Endothelial cell of umbilical vein (primary cell): ENCODE measurements at regions of chr14 and their contacts with region 1.

Region 1: DNA sequence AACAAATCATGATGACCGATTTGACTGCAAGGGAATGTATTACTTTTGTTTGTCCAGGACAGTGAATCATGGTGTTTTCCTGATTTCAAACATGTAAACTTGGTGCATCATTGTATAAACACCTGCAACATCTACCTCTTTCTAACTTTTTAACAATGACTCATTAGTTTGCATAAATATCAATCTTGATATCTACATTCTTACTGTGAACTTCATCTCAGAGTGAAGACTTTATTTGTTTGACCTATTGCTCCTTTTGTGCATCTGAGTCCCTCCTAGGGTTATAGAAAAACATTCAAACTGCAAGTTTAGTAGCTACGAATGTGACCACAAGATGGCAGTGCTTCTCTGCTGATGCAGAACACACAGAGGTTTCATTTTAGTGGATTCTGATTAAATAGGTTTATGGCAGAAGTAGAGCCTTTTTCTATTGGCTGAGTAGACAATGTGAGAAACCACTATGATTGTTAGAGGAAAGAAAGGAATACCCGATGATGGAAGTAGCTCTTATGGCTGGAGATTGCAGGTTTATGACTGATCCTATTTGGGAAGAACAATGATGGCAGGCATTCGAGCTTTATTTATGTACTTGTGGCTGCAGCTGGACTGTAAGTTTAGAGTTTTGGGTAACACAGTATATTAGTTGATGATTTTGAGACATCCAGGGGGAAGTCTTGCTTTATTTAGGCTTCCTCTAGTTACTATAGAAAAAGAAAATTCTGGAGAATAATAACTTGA is 244.2 kb upstream of the OR4E1 start:
- DNase-seq: peak; percentile 91
- H3K4me3 ChIP-seq: no peak overlapping the region
- H3K27ac ChIP-seq: peak overlapping the region; percentile 86
- H3K4me1 ChIP-seq: peaks cover 60% of the 10 kb centered on the region
- H3K27me3 ChIP-seq: no peaks in the 10 kb centered on the region
- CTCF ChIP-seq: peak; percentile 66 to 69
- POLR2A ChIP-seq: peak; percentile 16

Region 2: DNA sequence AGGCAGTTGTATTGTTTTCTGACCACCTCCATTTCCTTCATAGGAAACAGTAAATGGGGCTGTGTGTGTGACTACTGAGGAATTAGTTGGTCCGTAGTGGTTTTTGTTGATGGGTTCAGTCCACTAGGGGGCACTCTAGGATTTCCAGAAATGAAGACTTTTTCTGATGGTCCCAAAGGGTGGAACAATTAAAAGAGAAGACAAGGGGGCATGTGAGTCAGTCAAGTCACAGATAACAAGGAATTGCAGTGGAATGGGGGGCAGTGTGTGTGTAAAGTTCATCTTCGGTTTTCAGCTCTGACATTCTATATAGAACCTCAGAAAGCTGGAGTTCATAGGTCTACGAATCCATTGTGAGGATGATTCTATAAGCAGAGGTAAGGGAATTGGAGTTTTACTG is 57.7 kb before region 1 on chr14:
- CTCF ChIA-PET with region 1: interaction called, 41 read pairs
- POLR2A ChIA-PET with region 1: no interaction called
- dilution Hi-C with region 1: no loop called
- intact Hi-C with region 1: no loop called
- DNase-seq: peak; percentile 58
- H3K4me3 ChIP-seq: no peak overlapping the region
- H3K27ac ChIP-seq: no peak overlapping the region
- H3K4me1 ChIP-seq: no peaks in the 10 kb centered on the region
- H3K27me3 ChIP-seq: peaks cover 11 to 12% of the 10 kb centered on the region in 2 experiments
- CTCF ChIP-seq: peak; percentile 48 to 61
- POLR2A ChIP-seq: no peak

Region 3: DNA sequence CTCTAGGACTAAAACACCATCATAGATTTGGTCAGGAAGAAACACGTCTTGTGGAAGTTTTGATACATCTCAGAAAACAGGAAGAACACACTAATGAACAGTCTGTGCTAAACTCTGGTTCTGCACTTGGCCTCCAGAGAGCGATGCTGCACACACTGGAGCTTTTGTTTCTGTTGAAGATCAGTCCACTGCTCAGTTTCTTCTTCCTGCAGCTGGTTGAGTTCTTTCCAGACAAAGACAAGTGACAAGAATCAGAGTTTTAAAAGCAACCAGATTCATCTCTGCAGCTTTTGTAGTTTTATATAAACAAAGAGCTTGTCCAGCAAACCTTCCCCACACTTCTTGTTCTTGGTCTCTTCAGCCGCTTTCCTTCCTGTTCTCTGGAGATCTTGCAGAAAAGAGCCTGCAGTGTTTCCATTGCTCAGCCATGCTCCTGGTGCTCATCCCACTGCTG is 15.2 kb before region 1 on chr14:
- CTCF ChIA-PET with region 1: interaction called, 23 read pairs
- POLR2A ChIA-PET with region 1: no interaction called
- dilution Hi-C with region 1: no loop called
- intact Hi-C with region 1: no loop called
- DNase-seq: peak; percentile 21
- H3K4me3 ChIP-seq: no peak overlapping the region
- H3K27ac ChIP-seq: no peak overlapping the region
- H3K4me1 ChIP-seq: peaks cover 5% of the 10 kb centered on the region
- H3K27me3 ChIP-seq: no peaks in the 10 kb centered on the region
- CTCF ChIP-seq: peak; percentile 29 to 49
- POLR2A ChIP-seq: no peak

Region 4: DNA sequence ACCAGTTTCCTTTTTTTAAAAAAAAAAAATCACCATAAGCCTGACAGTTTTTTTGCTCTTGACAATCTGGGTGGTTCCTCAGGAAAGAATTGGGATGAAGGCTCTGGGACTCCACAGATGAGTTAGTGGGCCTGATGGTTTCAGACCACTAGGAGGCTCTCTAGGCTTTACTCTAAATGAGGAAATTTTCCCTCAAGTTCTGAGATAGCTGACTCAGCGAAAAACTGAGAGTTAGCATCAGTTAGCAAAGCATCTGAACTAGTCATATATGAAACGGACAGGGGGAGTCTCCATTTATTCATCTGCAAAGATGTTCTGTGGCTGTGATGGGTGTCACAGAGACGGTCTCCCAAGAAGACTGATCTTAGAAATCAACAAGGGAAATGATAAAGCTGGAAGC is 70.1 kb after region 1 on chr14:
- CTCF ChIA-PET with region 1: interaction called, 15 read pairs
- POLR2A ChIA-PET with region 1: no interaction called
- dilution Hi-C with region 1: no loop called
- intact Hi-C with region 1: no loop called
- DNase-seq: peak; percentile 39
- H3K4me3 ChIP-seq: no peak overlapping the region
- H3K27ac ChIP-seq: no peak overlapping the region
- H3K4me1 ChIP-seq: no peaks in the 10 kb centered on the region
- H3K27me3 ChIP-seq: peaks cover 5 to 14% of the 10 kb centered on the region in 2 experiments
- CTCF ChIP-seq: peak; percentile 60 to 69
- POLR2A ChIP-seq: no peak

Region 5: GRCh38 chr14:22099942-22100763 is 182.3 kb after region 1 on chr14:
- CTCF ChIA-PET with region 1: interaction called, 47 read pairs
- POLR2A ChIA-PET with region 1: no interaction called
- dilution Hi-C with region 1: no loop called
- intact Hi-C with region 1: loop called (anchors 1 kb)
- DNase-seq: peak; percentile 85
- H3K4me3 ChIP-seq: no peak overlapping the region
- H3K27ac ChIP-seq: no peak overlapping the region
- H3K4me1 ChIP-seq: peaks cover 9% of the 10 kb centered on the region
- H3K27me3 ChIP-seq: no peaks in the 10 kb centered on the region
- CTCF ChIP-seq: peak; percentile 77 to 80
- POLR2A ChIP-seq: no peak

Region 6: GRCh38 chr14:22375321-22375930 is 457.6 kb after region 1 on chr14:
- CTCF ChIA-PET with region 1: interaction called, 14 read pairs
- POLR2A ChIA-PET with region 1: no interaction called
- dilution Hi-C with region 1: no loop called
- intact Hi-C with region 1: no loop called
- DNase-seq: peak; percentile 62
- H3K4me3 ChIP-seq: no peak overlapping the region
- H3K27ac ChIP-seq: no peak overlapping the region
- H3K4me1 ChIP-seq: no peaks in the 10 kb centered on the region
- H3K27me3 ChIP-seq: peaks cover 28 to 52% of the 10 kb centered on the region in 2 experiments
- CTCF ChIP-seq: peak; percentile 35 to 47
- POLR2A ChIP-seq: no peak